CD8-positive, alpha-beta T cell (primary cell): ENCODE measurements at regions of chr6 and their contacts with region 1.

Region 1: DNA sequence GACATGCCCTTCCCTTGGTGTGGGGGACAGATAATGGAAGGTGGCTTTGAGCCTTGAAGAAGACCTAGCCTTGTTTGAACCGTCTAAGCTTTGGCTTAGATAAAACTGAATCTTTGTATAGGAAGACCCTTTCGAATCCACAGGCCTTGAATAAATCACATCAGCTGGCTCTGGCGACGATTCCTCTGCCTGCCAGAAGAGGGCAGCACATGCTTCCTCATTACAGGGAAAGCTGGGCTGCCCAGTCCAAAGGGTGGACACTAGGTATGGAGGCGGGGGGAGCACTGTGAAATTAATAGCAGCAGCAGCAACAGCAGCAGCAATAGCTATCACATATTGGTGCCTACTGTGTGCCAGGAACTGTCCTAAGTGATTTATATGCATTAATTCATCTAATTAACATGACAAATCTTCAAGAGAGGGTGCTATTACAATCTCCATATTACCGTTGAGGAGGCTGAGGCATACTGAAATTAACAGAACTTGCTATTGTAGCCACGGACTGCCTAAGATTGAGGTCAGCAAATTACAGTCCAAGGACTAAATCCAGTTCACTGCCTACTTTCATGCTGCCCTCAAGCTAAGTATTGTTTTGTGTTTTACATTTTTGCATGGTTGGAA is 85.1 kb downstream of the CLIC5 start:
- DNase-seq: peak; percentile 16 to 73 (median 57)
- ATAC-seq: peak; percentile 40
- H3K4me3 ChIP-seq: no peak overlapping the region
- H3K4me3 Mint-ChIP-seq: no peak overlapping the region
- H3K27ac ChIP-seq: no peak overlapping the region
- H3K27ac Mint-ChIP-seq: no peak overlapping the region
- H3K4me1 ChIP-seq: no peaks in the 10 kb centered on the region
- H3K4me1 Mint-ChIP-seq: no peaks in the 10 kb centered on the region
- H3K27me3 ChIP-seq: no peaks in the 10 kb centered on the region
- H3K27me3 Mint-ChIP-seq: no peaks in the 10 kb centered on the region
- CTCF ChIP-seq: peak; percentile 89

Region 2: GRCh38 chr6:44655412-44656342 is 1274.9 kb before region 1 on chr6:
- CTCF ChIA-PET with region 1: interaction called, 12 read pairs
- POLR2A ChIA-PET with region 1: no interaction called
- intact Hi-C with region 1: no loop called
- DNase-seq: peak; percentile 53 to 88 (median 77)
- ATAC-seq: peak; percentile 78
- H3K4me3 ChIP-seq: no peak overlapping the region
- H3K4me3 Mint-ChIP-seq: peak overlapping the region; percentile 20
- H3K27ac ChIP-seq: no peak overlapping the region
- H3K27ac Mint-ChIP-seq: peak overlapping the region; percentile 14
- H3K4me1 ChIP-seq: peaks cover 10% of the 10 kb centered on the region
- H3K4me1 Mint-ChIP-seq: peaks cover 7% of the 10 kb centered on the region
- H3K27me3 ChIP-seq: no peaks in the 10 kb centered on the region
- H3K27me3 Mint-ChIP-seq: peaks cover 5% of the 10 kb centered on the region
- CTCF ChIP-seq: peak; percentile 93

Region 3: GRCh38 chr6:45419571-45420082 is 510.9 kb before region 1 on chr6:
- CTCF ChIA-PET with region 1: no interaction called
- POLR2A ChIA-PET with region 1: no interaction called
- intact Hi-C with region 1: no loop called
- DNase-seq: peak; percentile 13 to 76 (median 62)
- ATAC-seq: peak; percentile 29
- H3K4me3 ChIP-seq: peak overlapping the region; percentile 64 to 76
- H3K4me3 Mint-ChIP-seq: peak overlapping the region; percentile 94
- H3K27ac ChIP-seq: peak overlapping the region in 1 of 2 experiments; percentile 43
- H3K27ac Mint-ChIP-seq: peak overlapping the region; percentile 89
- H3K4me1 ChIP-seq: peaks cover 21% of the 10 kb centered on the region
- H3K4me1 Mint-ChIP-seq: peaks cover 34% of the 10 kb centered on the region
- H3K27me3 ChIP-seq: peaks cover 0 to 13% of the 10 kb centered on the region in 2 experiments
- H3K27me3 Mint-ChIP-seq: peaks cover 2% of the 10 kb centered on the region
- CTCF ChIP-seq: peak; percentile 39

Region 4: GRCh38 chr6:45816674-45817297 is 113.7 kb before region 1 on chr6:
- CTCF ChIA-PET with region 1: no interaction called
- POLR2A ChIA-PET with region 1: no interaction called
- intact Hi-C with region 1: no loop called
- DNase-seq: no peak
- ATAC-seq: no peak
- H3K4me3 ChIP-seq: no peak overlapping the region
- H3K4me3 Mint-ChIP-seq: no peak overlapping the region
- H3K27ac ChIP-seq: no peak overlapping the region
- H3K27ac Mint-ChIP-seq: no peak overlapping the region
- H3K4me1 ChIP-seq: no peaks in the 10 kb centered on the region
- H3K4me1 Mint-ChIP-seq: no peaks in the 10 kb centered on the region
- H3K27me3 ChIP-seq: no peaks in the 10 kb centered on the region
- H3K27me3 Mint-ChIP-seq: peaks cover 2% of the 10 kb centered on the region
- CTCF ChIP-seq: no peak

Region 5: DNA sequence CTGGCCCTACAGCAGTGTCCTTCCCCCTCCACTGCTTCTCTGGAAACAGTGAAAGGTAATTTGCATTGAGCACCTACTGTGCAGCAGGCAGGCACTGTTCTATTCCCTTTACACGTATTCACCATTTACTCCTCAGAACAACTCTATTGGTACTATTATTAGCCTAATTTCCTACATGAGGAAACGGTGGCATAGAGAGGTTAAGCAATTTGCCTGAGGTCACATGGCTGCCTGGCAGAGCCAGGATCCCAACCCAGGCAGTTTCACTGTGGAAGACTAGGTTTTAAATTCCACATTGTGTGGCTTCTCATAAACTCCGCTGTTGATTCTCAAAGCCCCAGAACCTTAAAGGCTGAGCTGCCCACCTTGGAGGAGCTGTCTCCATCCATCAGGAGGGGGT is 12.4 kb after region 1 on chr6:
- CTCF ChIA-PET with region 1: interaction called, 18 read pairs
- POLR2A ChIA-PET with region 1: no interaction called
- intact Hi-C with region 1: no loop called
- DNase-seq: no peak
- ATAC-seq: no peak
- H3K4me3 ChIP-seq: no peak overlapping the region
- H3K4me3 Mint-ChIP-seq: no peak overlapping the region
- H3K27ac ChIP-seq: no peak overlapping the region
- H3K27ac Mint-ChIP-seq: no peak overlapping the region
- H3K4me1 ChIP-seq: no peaks in the 10 kb centered on the region
- H3K4me1 Mint-ChIP-seq: no peaks in the 10 kb centered on the region
- H3K27me3 ChIP-seq: no peaks in the 10 kb centered on the region
- H3K27me3 Mint-ChIP-seq: no peaks in the 10 kb centered on the region
- CTCF ChIP-seq: no peak

Region 6: DNA sequence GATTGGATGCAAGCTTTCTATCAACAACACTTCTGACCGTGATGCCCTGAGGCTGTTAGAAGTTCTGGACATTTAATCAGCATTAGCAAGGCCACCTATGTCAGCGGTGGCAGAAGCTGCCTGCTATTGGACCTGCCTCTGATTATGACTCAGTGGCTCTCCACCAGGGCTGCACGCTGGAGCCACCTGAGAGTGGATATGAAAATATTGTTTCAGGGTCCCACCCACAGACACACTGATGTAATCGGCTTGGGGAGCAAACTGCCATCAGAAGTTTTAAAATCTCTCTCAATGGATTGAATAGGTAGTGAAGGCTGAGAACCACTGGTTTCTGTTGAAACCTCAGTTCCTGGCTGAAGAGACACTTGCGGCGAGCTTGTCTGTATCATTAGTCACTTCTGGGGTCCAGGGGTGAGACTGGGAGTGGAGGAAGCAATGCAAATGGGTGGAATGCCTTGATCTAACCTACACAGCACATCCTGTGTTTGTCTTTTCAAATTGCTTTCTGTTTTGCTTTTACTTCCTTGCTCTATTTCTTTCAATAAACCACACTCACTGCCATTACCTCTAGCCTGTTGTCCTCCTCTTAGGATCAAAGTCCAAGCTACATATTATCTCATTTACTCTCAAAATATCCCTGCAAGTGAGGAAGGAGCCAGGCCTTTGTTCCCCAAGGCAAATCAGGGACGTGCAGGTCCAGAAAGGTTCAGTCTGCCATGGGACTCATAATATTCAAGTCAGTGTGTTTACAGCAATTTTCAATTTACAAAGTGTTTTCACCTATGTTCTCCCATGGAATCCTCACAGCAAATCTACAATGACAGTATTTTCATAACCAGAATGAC is 80.9 kb after region 1 on chr6:
- CTCF ChIA-PET with region 1: interaction called, 9 read pairs
- POLR2A ChIA-PET with region 1: no interaction called
- intact Hi-C with region 1: loop called in 1 of 2 experiments (anchors 2 kb)
- DNase-seq: peak; percentile 27 to 90 (median 67)
- ATAC-seq: peak; percentile 84
- H3K4me3 ChIP-seq: peak overlapping the region; percentile 23 to 33
- H3K4me3 Mint-ChIP-seq: peak overlapping the region; percentile 69
- H3K27ac ChIP-seq: peak overlapping the region; percentile 29 to 67
- H3K27ac Mint-ChIP-seq: peak overlapping the region; percentile 95
- H3K4me1 ChIP-seq: peaks cover 49% of the 10 kb centered on the region
- H3K4me1 Mint-ChIP-seq: peaks cover 54% of the 10 kb centered on the region
- H3K27me3 ChIP-seq: no peaks in the 10 kb centered on the region
- H3K27me3 Mint-ChIP-seq: peaks cover under 1% of the 10 kb centered on the region
- CTCF ChIP-seq: no peak

Region 7: DNA sequence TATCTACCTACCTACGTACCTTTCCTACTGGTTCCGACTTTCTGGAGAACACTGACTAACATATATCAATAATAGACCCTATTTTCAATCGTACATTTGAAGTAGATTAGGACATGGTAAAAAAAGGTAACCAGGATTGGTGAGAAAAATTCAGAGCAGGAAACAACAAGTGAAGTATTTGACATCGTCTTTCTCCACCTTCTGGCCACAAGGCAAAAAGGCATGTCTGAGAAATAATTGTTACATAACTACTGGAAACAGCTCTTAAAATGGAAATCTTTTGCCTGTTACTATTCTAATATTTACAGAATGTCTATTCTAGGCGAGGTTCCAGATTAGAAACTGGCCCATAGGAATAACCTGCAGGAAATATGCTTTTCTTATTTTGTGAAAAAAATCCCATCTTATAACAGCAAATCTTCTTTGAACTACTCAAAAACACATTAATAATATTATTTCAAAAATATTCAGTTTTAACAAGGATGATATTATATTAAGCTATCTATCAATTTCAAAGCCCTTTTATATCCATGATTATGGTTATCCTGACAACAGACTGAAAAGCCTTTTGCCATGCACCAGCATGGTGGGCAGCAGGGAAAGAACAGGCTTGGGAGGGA is 479.9 kb after region 1 on chr6:
- CTCF ChIA-PET with region 1: interaction called, 11 read pairs
- POLR2A ChIA-PET with region 1: no interaction called
- intact Hi-C with region 1: loop called (anchors 1 to 2 kb)
- DNase-seq: peak in 3 of 9 experiments; percentile 31 to 79 (median 73)
- ATAC-seq: no peak
- H3K4me3 ChIP-seq: no peak overlapping the region
- H3K4me3 Mint-ChIP-seq: no peak overlapping the region
- H3K27ac ChIP-seq: no peak overlapping the region
- H3K27ac Mint-ChIP-seq: no peak overlapping the region
- H3K4me1 ChIP-seq: no peaks in the 10 kb centered on the region
- H3K4me1 Mint-ChIP-seq: no peaks in the 10 kb centered on the region
- H3K27me3 ChIP-seq: no peaks in the 10 kb centered on the region
- H3K27me3 Mint-ChIP-seq: no peaks in the 10 kb centered on the region
- CTCF ChIP-seq: peak; percentile 63

Region 8: GRCh38 chr6:47047479-47048407 is 1117.2 kb after region 1 on chr6:
- CTCF ChIA-PET with region 1: no interaction called
- POLR2A ChIA-PET with region 1: no interaction called
- intact Hi-C with region 1: loop called (anchors 10 kb)
- DNase-seq: peak in 5 of 9 experiments; percentile 1 to 42 (median 16)
- ATAC-seq: no peak
- H3K4me3 ChIP-seq: no peak overlapping the region
- H3K4me3 Mint-ChIP-seq: no peak overlapping the region
- H3K27ac ChIP-seq: no peak overlapping the region
- H3K27ac Mint-ChIP-seq: no peak overlapping the region
- H3K4me1 ChIP-seq: no peaks in the 10 kb centered on the region
- H3K4me1 Mint-ChIP-seq: peaks cover 3% of the 10 kb centered on the region
- H3K27me3 ChIP-seq: no peaks in the 10 kb centered on the region
- H3K27me3 Mint-ChIP-seq: peaks cover 8% of the 10 kb centered on the region
- CTCF ChIP-seq: peak; percentile 46